GM13977 (cell line): ENCODE measurements at regions of chr4 and their contacts with region 1.

Region 1: GRCh38 chr4:36414248-36414647 is 132.8 kb downstream of the DTHD1 start:
- DNase-seq: peak; percentile 26
- CTCF ChIP-seq: peak; percentile 60

Region 2: DNA sequence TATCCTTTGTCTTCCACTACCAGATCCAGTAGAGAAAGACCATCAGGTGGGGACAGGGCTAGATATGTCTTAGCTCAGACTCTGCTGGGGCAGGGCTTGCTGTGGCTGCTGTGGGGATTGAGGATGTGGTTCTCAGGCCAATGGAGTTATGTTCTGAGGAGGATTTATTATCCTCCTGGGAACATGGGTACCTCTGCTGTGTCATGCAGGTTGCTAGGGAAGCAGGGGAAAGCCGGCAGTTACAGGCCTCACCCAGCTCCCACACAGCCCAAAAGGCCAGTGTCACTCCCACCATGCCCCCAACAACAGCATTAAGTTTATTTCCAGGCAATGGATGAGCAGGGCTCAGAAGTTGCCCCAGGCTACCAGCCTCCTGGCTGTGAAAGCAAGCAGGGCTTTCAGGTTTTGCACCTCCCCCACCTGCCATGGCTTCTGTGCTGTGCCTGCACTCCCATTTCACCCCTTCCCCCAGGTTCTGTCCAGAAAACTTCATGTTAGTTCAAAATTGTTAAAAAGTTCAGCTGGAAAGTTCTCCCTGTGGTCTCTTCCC is 1049.9 kb before region 1 on chr4:
- in situ Hi-C with region 1: no loop called
- DNase-seq: no peak
- CTCF ChIP-seq: no peak

Region 3: GRCh38 chr4:37389967-37390580 is 975.8 kb after region 1 on chr4:
- in situ Hi-C with region 1: loop called (anchors 10 kb)
- DNase-seq: peak; percentile 46
- CTCF ChIP-seq: peak; percentile 70